ENCODE measurements at regions of chr17 and their contacts with region 1.

Region 1: GRCh38 chr17:49556223-49556971 is 19.3 kb upstream of the NXPH3 start:
- DNase-seq: peak in 1 of 2 donors; percentile 86
- H3K4me3 ChIP-seq: no peak overlapping the region
- H3K27ac ChIP-seq: no peak overlapping the region
- H3K4me1 ChIP-seq: peaks cover 17% of the 10 kb centered on the region
- H3K27me3 ChIP-seq: no peaks in the 10 kb centered on the region
- CTCF ChIP-seq: peak; percentile 95 to 98 (median 97)
- POLR2A ChIP-seq: no peak

Region 2: DNA sequence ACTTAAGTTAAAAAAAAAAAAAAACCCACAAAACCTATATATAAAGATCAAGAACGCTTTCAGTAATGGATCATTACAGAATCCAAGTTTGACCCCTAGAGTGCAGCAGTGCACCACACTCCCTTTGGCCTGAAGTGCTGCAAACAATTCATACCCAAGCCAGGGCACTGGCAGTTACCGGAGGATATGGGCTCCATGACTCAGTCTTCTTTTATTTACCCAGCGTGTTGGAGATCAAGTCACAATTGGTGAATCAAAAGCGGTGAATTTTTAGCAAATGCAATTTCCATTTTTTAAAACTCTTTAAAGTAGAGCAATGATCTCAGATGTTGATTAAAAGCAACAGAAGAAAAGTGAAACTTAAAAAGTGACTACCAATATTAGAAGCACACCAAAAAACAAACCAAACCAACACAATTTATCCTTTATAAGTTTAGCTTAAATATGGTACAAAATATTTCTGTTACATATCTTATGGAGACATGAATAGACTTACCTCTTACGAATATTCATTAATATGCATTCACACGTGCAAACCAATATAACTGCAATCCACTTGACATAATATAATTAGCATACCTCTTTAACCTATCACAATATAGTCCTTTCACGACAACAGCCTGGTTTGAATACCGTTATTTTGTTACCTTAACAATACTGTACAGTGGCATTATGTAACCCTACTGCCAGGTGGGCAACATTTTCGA is 240.7 kb before region 1 on chr17:
- intact Hi-C with region 1: loop called (anchors 10 kb)
- DNase-seq: no peak
- H3K4me3 ChIP-seq: no peak overlapping the region
- H3K27ac ChIP-seq: no peak overlapping the region
- H3K4me1 ChIP-seq: peaks cover 10% of the 10 kb centered on the region
- H3K27me3 ChIP-seq: no peaks in the 10 kb centered on the region
- CTCF ChIP-seq: peak; percentile 57 to 73 (median 64)
- POLR2A ChIP-seq: no peak

Region 3: GRCh38 chr17:49407981-49408501 is 148.4 kb before region 1 on chr17:
- intact Hi-C with region 1: loop called (anchors 10 kb)
- DNase-seq: no peak
- H3K4me3 ChIP-seq: no peak overlapping the region
- H3K27ac ChIP-seq: no peak overlapping the region
- H3K4me1 ChIP-seq: peaks cover 5% of the 10 kb centered on the region
- H3K27me3 ChIP-seq: no peaks in the 10 kb centered on the region
- CTCF ChIP-seq: peak; percentile 2 to 43 (median 33)
- POLR2A ChIP-seq: no peak

Region 4: GRCh38 chr17:49434821-49435670 is 121.4 kb before region 1 on chr17:
- intact Hi-C with region 1: loop called (anchors 5 kb)
- DNase-seq: no peak
- H3K4me3 ChIP-seq: no peak overlapping the region
- H3K27ac ChIP-seq: no peak overlapping the region
- H3K4me1 ChIP-seq: no peaks in the 10 kb centered on the region
- H3K27me3 ChIP-seq: no peaks in the 10 kb centered on the region
- CTCF ChIP-seq: peak in 2 of 3 experiments; percentile 16 to 54
- POLR2A ChIP-seq: no peak

Region 5: DNA sequence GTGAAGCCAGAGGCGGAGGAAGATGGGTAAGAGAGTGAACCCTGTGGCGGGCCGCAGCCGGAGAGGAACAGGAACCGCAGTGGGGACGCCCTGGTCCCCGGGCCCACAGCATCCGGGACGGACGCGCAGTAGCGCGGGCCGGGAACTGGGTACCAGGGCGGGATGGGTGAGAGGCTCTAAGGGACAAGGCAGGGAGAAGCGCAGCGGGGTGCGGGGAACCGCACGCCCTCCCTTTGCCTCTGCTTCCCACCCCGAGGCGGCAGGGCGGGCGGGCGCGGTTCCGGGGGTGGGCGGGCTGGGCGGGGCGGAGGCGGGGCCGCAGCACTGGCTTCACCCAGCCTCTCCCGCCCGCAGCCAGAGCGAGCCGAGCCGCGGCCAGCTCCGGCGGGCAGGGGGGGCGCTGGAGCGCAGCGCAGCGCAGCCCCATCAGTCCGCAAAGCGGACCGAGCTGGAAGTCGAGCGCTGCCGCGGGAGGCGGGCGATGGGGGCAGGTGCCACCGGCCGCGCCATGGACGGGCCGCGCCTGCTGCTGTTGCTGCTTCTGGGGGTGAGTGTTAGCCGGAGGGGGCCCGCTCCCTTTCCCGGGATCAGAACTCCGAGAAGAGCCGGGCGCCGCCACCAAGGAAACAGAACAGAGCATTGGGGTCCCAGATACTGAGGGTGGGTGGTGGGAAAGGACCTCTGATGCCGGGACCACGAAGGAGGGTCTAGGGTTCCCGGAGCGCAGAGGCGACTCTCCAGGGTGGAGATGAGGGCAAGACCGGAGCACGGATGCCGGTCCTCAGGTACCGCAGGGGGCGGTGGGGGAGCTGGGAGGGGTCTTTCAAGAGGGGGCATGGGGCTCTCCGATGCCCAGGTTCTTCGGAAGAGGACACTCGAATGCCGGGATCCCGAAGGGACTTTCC is 61.2 kb before region 1 on chr17 and contains the start of gene NGFR:
- intact Hi-C with region 1: loop called (anchors 2 kb)
- DNase-seq: no peak
- H3K4me3 ChIP-seq: peak within 1 kb of the TSS; percentile 45 to 56
- H3K27ac ChIP-seq: peak within 1 kb of the TSS; percentile 34
- H3K4me1 ChIP-seq: peaks cover 29% of the 10 kb centered on the region
- H3K27me3 ChIP-seq: no peaks in the 10 kb centered on the region
- CTCF ChIP-seq: no peak
- POLR2A ChIP-seq: peak in 1 of 2 donors; percentile 36
- total RNA-seq, gene NGFR: 41.7 TPM

Region 6: GRCh38 chr17:49997791-49998703 is 441.6 kb after region 1 on chr17:
- intact Hi-C with region 1: loop called (anchors 10 kb)
- DNase-seq: no peak
- H3K4me3 ChIP-seq: no peak overlapping the region
- H3K27ac ChIP-seq: no peak overlapping the region
- H3K4me1 ChIP-seq: peaks cover 28% of the 10 kb centered on the region
- H3K27me3 ChIP-seq: no peaks in the 10 kb centered on the region
- CTCF ChIP-seq: peak; percentile 84 to 99 (median 90)
- POLR2A ChIP-seq: no peak

Measured in vagina (tissue), 2 donors.